ENCODE measurements at regions of chr5 and their contacts with region 1.

Region 1: DNA sequence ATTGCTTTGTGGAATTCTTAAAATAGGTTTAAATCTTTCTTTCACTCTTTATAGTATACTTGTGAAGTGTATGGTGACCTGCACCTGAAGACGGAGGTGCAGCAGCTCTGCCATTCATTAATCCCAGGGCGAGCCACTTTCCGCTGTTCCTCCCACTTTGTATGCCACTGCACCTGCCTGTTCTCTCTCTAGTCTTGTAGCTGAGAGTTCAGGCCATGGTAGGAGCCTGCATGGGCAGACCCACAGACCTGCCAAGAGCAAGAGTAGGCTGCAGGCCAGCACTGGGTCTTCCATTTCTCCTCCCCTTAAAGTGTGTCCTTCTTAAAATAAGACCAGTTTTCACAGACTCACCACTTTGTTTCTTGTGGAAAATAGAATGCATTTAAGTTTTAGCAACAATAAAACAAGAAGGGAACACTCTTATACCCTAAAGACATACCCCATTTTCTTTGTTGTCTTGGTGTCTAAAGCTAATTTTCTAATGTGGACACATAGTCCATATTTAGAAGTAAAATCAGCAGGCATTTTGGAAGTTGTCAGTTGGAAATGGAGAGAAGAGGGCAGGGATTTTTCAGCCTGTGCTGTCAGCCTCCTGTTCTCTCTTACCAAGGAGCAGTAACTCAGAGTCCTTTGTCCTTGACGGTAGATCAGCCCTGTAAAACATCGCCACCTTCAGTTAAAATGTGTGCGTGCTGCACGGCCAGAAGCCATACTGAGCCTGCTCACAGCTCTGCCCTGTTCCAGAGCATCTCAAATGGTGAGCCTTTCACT is 103.2 kb downstream of the SNCAIP start:
- DNase-seq: peak; percentile 74
- H3K4me3 ChIP-seq: no peak overlapping the region
- H3K27ac ChIP-seq: no peak overlapping the region
- H3K4me1 ChIP-seq: no peaks in the 10 kb centered on the region
- H3K27me3 ChIP-seq: no peaks in the 10 kb centered on the region
- CTCF ChIP-seq: peak; percentile 62 to 69
- POLR2A ChIP-seq: no peak

Region 2: GRCh38 chr5:122091936-122092600 is 323.1 kb before region 1 on chr5:
- CTCF ChIA-PET with region 1: no interaction called
- POLR2A ChIA-PET with region 1: no interaction called
- dilution Hi-C with region 1: no loop called
- intact Hi-C with region 1: loop called (anchors 5 kb)
- DNase-seq: peak; percentile 48
- H3K4me3 ChIP-seq: no peak overlapping the region
- H3K27ac ChIP-seq: no peak overlapping the region
- H3K4me1 ChIP-seq: peaks cover 19% of the 10 kb centered on the region
- H3K27me3 ChIP-seq: no peaks in the 10 kb centered on the region
- CTCF ChIP-seq: peak; percentile 26 to 32
- POLR2A ChIP-seq: no peak

Region 3: DNA sequence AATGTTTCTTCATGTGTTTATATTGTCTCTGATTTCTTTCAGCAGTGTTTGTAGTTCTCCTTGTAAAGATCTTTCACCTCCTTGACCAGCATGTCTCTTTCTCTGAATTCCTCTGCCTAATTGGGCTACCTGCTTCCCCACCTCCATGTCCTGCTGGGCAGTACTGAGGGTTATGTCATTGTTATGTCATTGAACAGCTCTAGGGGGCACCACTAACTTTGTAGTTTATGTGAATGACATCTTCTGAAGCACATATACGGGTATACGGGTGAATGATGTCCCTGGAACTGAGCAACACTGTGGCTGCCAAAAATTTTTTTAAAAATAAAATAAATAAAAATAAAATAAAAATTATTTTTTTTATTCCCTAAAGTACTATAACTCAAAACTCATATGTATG is 120.1 kb before region 1 on chr5:
- CTCF ChIA-PET with region 1: interaction called, 6 read pairs
- POLR2A ChIA-PET with region 1: no interaction called
- dilution Hi-C with region 1: no loop called
- intact Hi-C with region 1: loop called (anchors 1 kb)
- DNase-seq: peak; percentile 37
- H3K4me3 ChIP-seq: no peak overlapping the region
- H3K27ac ChIP-seq: no peak overlapping the region
- H3K4me1 ChIP-seq: no peaks in the 10 kb centered on the region
- H3K27me3 ChIP-seq: peaks cover 0 to 4% of the 10 kb centered on the region in 2 experiments
- CTCF ChIP-seq: peak; percentile 21 to 43
- POLR2A ChIP-seq: no peak

Region 4: DNA sequence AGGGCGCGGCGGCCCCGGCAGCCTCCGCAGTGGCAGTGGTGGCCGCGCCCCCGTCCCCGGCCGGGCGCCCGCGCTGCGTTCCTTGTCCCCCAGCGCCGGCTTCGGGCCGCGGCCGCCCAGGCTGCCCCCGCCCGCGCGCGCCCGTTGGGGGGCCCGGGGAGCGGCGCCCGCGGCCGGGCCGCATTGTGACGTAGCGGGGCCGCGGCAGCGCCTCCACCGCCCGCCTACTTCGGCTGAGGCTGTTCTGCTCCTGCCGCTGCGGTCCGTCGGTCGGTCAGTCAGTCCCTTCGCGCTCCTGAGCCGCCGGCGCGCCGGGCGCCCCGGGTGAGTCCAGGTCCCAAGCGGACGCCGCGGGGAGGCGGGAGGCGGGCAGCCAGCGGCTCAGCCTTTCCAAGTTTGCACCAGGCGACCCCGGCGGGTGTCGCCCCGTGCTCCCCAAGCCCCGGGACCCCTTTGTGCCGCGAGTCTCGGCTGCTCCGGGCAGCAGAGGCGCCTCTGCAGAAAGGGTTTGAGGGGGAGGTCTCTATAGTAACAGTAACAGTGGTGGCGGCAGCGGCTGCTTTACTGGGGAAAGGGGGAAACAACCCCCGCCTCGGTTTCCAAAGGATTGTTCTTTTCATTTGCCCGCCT is 103.1 kb before region 1 on chr5 and contains the start of gene SNCAIP:
- CTCF ChIA-PET with region 1: no interaction called
- POLR2A ChIA-PET with region 1: no interaction called
- dilution Hi-C with region 1: no loop called
- intact Hi-C with region 1: loop called (anchors 1 kb)
- DNase-seq: peak; percentile 58
- H3K4me3 ChIP-seq: peak within 1 kb of the TSS; percentile 59 to 89 (median 81)
- H3K27ac ChIP-seq: peak within 1 kb of the TSS; percentile 62
- H3K4me1 ChIP-seq: peaks cover 25% of the 10 kb centered on the region
- H3K27me3 ChIP-seq: no peaks in the 10 kb centered on the region
- CTCF ChIP-seq: no peak
- POLR2A ChIP-seq: no peak
- total RNA-seq, gene SNCAIP: 35.9 and 42.0 TPM in 2 replicates

Region 5: DNA sequence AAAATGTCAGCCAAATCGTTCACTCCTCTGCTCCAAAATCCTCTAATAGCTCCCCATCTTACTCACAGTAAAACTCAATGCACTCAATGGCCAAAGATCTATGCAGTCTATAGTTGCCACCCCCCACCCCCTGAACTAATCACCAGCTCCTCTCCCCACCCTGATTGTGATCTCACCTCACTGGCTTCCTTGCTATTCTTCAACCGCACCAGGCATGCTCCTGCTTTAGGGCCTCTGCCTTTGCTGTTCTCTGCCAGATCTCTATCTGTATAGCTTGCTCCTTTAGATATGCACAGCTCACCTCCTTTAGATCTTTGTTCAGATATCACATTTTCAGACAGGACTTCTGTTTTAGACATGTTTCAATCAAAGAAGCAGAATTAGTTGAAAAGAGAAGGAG is 326.5 kb after region 1 on chr5:
- CTCF ChIA-PET with region 1: no interaction called
- POLR2A ChIA-PET with region 1: no interaction called
- dilution Hi-C with region 1: no loop called
- intact Hi-C with region 1: no loop called
- DNase-seq: no peak
- H3K4me3 ChIP-seq: no peak overlapping the region
- H3K27ac ChIP-seq: no peak overlapping the region
- H3K4me1 ChIP-seq: peaks cover 1% of the 10 kb centered on the region
- H3K27me3 ChIP-seq: peaks cover 0 to 3% of the 10 kb centered on the region in 2 experiments
- CTCF ChIP-seq: no peak
- POLR2A ChIP-seq: no peak

Measured in endothelial cell of umbilical vein (primary cell).